Posterior cingulate gyrus (tissue), 11 donors: ENCODE measurements at regions of chr9 and their contacts with region 1.

Region 1: DNA sequence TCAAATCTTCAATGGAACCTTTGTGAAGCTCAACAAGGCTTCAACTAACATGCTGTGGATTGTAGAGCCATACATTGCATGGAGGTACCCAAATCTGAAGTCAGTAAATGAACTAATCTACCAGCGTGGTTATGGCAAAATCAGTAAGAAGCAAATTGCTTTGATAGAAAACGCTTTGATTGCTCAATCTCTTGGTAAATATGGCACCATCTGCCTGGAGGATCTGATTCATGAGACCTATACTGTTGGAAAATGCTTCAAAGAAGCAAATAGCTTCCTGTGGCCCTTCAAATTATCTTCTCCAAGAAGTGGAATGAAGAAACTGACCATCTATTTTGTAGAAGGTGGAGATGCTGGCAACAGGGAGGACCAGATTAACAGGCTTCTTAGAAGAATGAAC is 54.7 kb upstream of the TTC39B start:
- DNase-seq: no peak

Region 2: DNA sequence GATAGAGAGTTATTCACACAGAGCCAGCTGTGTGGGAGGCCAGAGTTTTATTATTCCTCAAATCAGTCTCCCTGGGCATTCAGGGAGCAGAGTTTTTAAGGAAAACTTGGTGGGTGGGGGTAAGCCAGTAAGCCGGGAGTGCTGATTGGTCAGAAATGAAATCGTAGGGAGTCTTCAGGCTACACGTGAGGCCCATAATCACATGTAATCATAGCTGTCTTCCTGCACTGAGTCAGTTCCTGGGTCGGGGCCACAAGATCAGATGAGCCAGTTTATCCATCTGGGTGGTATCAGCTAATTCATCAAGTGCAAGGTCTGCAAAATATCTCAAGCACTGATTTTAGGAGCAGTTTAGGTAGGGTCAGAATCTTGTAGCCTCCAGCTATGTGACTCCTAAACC is 43.9 kb before region 1 on chr9:
- intact Hi-C with region 1: loop called (anchors 5 kb)
- DNase-seq: no peak